MCF 10A (cell line): ENCODE measurements at regions of chr16 and their contacts with region 1.

Region 1: DNA sequence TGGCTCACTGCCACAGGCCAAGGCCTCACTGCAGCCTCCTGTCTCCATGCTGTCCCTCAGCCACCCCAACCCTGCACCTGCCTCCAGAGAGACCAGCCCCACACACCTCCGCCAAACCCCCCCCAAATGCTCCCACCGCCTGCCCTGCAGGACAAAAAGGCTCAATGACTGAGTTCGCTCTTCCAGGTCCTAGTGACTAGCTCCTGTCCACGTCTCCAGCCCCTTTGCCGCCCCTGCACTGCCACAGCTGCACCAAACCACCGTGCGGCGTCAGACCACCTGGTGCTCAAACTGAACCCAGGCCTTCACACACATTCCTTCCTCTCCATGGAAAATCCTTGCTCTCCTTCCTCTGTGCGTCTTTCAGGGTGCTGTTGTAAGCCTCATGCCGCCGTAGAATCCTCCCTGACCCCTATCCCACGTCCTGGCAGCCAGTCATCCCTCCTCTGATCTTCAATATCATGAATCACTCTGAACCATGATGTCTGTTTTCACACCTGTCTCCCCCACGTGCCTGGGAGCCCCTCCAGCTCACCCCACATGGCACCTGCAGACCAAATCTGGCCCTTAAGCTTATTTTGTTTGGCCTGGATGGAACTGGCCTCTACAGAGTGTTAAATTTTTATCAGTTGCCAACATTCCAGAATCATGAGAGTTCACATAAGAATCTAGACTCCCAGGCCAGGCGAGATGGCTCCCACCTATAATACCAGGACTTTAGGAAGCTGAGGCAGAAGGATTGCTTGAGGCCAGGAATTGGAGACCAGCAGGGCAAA is 4.3 kb upstream of the GSG1L start:
- DNase-seq: peak; percentile 19
- H3K4me3 Mint-ChIP-seq: no peak overlapping the region
- H3K27ac Mint-ChIP-seq: no peak overlapping the region
- H3K4me1 Mint-ChIP-seq: peaks cover 8% of the 10 kb centered on the region
- H3K27me3 Mint-ChIP-seq: peaks cover 44% of the 10 kb centered on the region
- CTCF ChIP-seq: no peak

Region 2: GRCh38 chr16:27600381-27600780 is 467.4 kb before region 1 on chr16:
- CTCF ChIA-PET with region 1: interaction called, 7 read pairs
- POLR2A ChIA-PET with region 1: no interaction called
- intact Hi-C with region 1: loop called (anchors 1 kb)
- DNase-seq: no peak
- H3K4me3 Mint-ChIP-seq: no peak overlapping the region
- H3K27ac Mint-ChIP-seq: no peak overlapping the region
- H3K4me1 Mint-ChIP-seq: no peaks in the 10 kb centered on the region
- H3K27me3 Mint-ChIP-seq: no peaks in the 10 kb centered on the region
- CTCF ChIP-seq: no peak

Region 3: GRCh38 chr16:27690608-27691007 is 377.2 kb before region 1 on chr16:
- CTCF ChIA-PET with region 1: interaction called, 4 read pairs
- POLR2A ChIA-PET with region 1: no interaction called
- intact Hi-C with region 1: loop called (anchors 5 kb)
- DNase-seq: peak; percentile 9
- H3K4me3 Mint-ChIP-seq: no peak overlapping the region
- H3K27ac Mint-ChIP-seq: no peak overlapping the region
- H3K4me1 Mint-ChIP-seq: no peaks in the 10 kb centered on the region
- H3K27me3 Mint-ChIP-seq: no peaks in the 10 kb centered on the region
- CTCF ChIP-seq: peak; percentile 9

Region 4: GRCh38 chr16:28029387-28030002 is 38.3 kb before region 1 on chr16:
- CTCF ChIA-PET with region 1: interaction called, 10 read pairs
- POLR2A ChIA-PET with region 1: no interaction called
- intact Hi-C with region 1: no loop called
- DNase-seq: no peak
- H3K4me3 Mint-ChIP-seq: no peak overlapping the region
- H3K27ac Mint-ChIP-seq: no peak overlapping the region
- H3K4me1 Mint-ChIP-seq: no peaks in the 10 kb centered on the region
- H3K27me3 Mint-ChIP-seq: peaks cover 23% of the 10 kb centered on the region
- CTCF ChIP-seq: no peak

Region 5: DNA sequence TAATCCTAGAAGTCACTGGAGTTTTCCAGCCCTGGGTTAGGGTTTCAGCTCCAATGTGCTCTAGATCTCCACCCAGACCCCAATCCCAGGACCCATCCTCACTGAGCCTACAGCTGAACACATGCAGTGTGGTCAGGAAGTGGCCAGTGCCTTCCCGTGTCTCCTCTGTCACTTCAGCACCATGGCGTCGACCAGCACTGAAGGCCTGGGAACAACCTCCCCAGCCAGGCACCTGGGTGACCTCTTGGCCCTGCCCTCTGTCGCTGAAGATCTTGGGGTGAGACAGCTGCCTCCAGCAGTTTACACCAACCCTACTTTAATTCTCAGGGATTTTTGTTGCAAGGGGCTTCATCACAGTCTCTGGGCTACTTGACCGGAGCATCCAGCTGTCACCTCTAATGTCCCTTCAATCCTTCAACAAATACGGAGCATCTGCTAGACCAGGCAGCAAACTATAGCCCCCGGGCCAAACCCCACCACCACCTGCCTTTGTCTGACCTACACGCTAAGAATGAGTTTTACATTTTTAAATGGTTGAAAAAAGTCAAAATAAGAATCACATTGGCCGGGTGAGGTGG is 13.7 kb after region 1 on chr16:
- CTCF ChIA-PET with region 1: interaction called, 19 read pairs
- POLR2A ChIA-PET with region 1: interaction called, 3 read pairs
- intact Hi-C with region 1: no loop called
- DNase-seq: no peak
- H3K4me3 Mint-ChIP-seq: no peak overlapping the region
- H3K27ac Mint-ChIP-seq: no peak overlapping the region
- H3K4me1 Mint-ChIP-seq: no peaks in the 10 kb centered on the region
- H3K27me3 Mint-ChIP-seq: peaks cover 9% of the 10 kb centered on the region
- CTCF ChIP-seq: no peak

Region 6: DNA sequence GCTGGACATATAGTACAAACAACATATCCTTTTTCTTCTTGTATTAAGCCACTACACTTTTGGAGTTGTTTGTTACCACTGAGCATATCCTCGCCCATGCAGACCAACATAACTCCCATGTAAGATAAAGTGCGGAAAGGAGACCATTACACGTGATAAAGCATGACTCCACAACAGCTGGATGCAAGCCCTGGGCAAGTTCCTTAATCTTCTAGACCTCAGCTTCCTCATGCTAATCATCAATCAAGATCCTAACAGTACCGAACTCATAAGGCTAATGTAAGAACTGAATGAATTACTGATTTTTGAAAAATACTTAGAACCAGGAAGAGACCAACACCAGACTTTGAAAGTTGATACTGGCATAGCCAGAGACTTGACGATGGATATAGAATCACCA is 42.7 kb after region 1 on chr16:
- CTCF ChIA-PET with region 1: no interaction called
- POLR2A ChIA-PET with region 1: no interaction called
- intact Hi-C with region 1: no loop called
- DNase-seq: no peak
- H3K4me3 Mint-ChIP-seq: no peak overlapping the region
- H3K27ac Mint-ChIP-seq: peak overlapping the region; percentile 57
- H3K4me1 Mint-ChIP-seq: no peaks in the 10 kb centered on the region
- H3K27me3 Mint-ChIP-seq: no peaks in the 10 kb centered on the region
- CTCF ChIP-seq: no peak